CD4-positive, alpha-beta T cell (primary cell): ENCODE measurements at regions of chr10 and their contacts with region 1.

Region 1: DNA sequence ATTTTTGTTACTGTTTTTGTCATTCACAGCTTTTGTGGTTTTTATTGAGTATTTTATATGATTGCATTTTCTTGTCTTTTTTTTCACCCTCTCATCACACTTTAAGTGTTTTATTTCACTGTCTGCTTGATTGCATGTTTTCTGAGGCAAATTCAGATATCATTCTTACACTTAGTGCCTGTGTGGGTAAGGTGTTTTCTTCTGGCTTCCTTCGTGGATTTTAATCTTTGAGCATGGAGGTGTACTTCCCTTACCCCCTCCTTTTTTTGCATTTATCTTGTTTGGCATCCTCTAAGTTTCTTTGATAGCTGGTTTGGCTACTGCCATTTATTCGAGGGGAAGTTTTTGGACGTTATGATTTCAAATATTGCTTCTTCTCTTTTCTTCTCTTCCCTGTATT is 127.9 kb downstream of the MLLT10 start:
- DNase-seq: peak in 1 of 14 experiments; percentile 14
- ATAC-seq: no peak
- H3K4me3 ChIP-seq: no peak overlapping the region
- H3K4me3 Mint-ChIP-seq: peak overlapping the region; percentile 23
- H3K27ac ChIP-seq: no peak overlapping the region
- H3K27ac Mint-ChIP-seq: peak overlapping the region; percentile 2
- H3K4me1 ChIP-seq: no peaks in the 10 kb centered on the region
- H3K4me1 Mint-ChIP-seq: peaks cover 41% of the 10 kb centered on the region
- H3K27me3 ChIP-seq: no peaks in the 10 kb centered on the region
- H3K27me3 Mint-ChIP-seq: no peaks in the 10 kb centered on the region
- CTCF ChIP-seq: no peak

Region 2: GRCh38 chr10:21702633-21703111 is 40.7 kb after region 1 on chr10:
- CTCF ChIA-PET with region 1: no interaction called
- POLR2A ChIA-PET with region 1: no interaction called
- intact Hi-C with region 1: loop called in 1 of 2 experiments (anchors 5 kb)
- DNase-seq: peak in 3 of 14 experiments; percentile 48 to 74 (median 56)
- ATAC-seq: peak; percentile 86
- H3K4me3 ChIP-seq: no peak overlapping the region
- H3K4me3 Mint-ChIP-seq: peak overlapping the region; percentile 40
- H3K27ac ChIP-seq: no peak overlapping the region
- H3K27ac Mint-ChIP-seq: peak overlapping the region; percentile 55
- H3K4me1 ChIP-seq: peaks cover 18% of the 10 kb centered on the region
- H3K4me1 Mint-ChIP-seq: peaks cover 29% of the 10 kb centered on the region
- H3K27me3 ChIP-seq: no peaks in the 10 kb centered on the region
- H3K27me3 Mint-ChIP-seq: no peaks in the 10 kb centered on the region
- CTCF ChIP-seq: no peak